Activated T-helper 1 cell treated with anti-CD3 and anti-CD28 coated beads, Interleukin-12 subunit alpha, Interleukin-12 subunit beta, Interleukin-2, Interleukin-4 antibody, amounts not matched to agents 30 ng/mL and 10 ng/mL and 1 ng/mL, durations not matched to agents 14 hours and 24 hours and 36 hours (primary cell): ENCODE measurements at regions of chr3 and their contacts with region 1.

Region 1: GRCh38 chr3:8987645-8988383 is 24.5 kb upstream of the RAD18 start:
- DNase-seq: peak; percentile 38
- H3K4me3 Mint-ChIP-seq: no peak overlapping the region
- H3K27ac Mint-ChIP-seq: no peak overlapping the region
- H3K4me1 Mint-ChIP-seq: no peaks in the 10 kb centered on the region
- H3K27me3 Mint-ChIP-seq: peaks cover 3% of the 10 kb centered on the region

Region 2: DNA sequence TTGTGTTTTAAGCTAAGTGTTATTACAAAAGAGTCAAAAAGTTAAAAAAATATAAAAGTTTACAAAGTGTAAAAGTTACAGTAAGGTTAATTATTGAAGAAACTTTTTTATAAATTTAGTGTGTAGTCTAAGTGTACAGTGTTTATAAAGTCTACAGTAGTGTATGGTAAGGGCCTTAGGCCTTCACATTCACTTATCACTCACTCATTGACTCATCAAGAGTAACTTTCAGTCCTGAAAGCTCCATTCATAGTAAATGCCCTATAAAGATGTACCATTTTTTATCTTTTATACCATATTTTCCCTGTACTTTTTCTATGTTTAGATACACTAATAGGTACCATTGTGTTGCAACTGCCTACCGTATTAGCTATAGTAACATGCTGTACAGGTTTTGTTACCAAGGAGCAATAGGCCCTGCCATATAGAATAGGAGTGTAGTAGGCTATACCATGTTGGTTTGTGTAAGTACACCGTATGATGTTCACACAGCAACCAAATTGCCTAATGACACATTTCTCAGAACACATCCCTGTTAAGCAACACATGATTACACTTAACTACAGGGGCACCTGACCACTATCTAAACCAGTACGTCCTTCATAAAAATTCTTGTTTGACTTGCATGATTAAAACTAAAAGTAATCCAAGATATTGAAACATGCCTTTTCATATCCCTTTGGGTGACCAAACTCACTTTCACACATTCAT is 41.8 kb before region 1 on chr3:
- intact Hi-C with region 1: no loop called
- DNase-seq: no peak
- H3K4me3 Mint-ChIP-seq: no peak overlapping the region
- H3K27ac Mint-ChIP-seq: no peak overlapping the region
- H3K4me1 Mint-ChIP-seq: peaks cover 6% of the 10 kb centered on the region
- H3K27me3 Mint-ChIP-seq: no peaks in the 10 kb centered on the region

Region 3: GRCh38 chr3:9067352-9067975 is 79.7 kb after region 1 on chr3:
- intact Hi-C with region 1: loop called (anchors 1 kb)
- DNase-seq: no peak
- H3K4me3 Mint-ChIP-seq: no peak overlapping the region
- H3K27ac Mint-ChIP-seq: no peak overlapping the region
- H3K4me1 Mint-ChIP-seq: no peaks in the 10 kb centered on the region
- H3K27me3 Mint-ChIP-seq: peaks cover 4% of the 10 kb centered on the region